GM13977 (cell line): ENCODE measurements at regions of chr11 and their contacts with region 1.

Region 1: DNA sequence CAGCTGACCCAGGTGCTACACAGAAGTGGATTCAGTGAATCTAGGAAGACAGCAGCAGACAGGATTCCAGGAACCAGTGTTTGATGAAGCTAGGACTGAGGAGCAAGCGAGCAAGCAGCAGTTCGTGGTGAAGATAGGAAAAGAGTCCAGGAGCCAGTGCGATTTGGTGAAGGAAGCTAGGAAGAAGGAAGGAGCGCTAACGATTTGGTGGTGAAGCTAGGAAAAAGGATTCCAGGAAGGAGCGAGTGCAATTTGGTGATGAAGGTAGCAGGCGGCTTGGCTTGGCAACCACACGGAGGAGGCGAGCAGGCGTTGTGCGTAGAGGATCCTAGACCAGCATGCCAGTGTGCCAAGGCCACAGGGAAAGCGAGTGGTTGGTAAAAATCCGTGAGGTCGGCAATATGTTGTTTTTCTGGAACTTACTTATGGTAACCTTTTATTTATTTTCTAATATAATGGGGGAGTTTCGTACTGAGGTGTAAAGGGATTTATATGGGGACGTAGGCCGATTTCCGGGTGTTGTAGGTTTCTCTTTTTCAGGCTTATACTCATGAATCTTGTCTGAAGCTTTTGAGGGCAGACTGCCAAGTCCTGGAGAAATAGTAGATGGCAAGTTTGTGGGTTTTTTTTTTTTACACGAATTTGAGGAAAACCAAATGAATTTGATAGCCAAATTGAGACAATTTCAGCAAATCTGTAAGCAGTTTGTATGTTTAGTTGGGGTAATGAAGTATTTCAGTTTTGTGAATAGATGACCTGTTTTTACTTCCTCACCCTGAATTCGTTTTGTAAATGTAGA is 1.7 kb downstream of the MALAT1 start:
- DNase-seq: no peak
- CTCF ChIP-seq: no peak

Region 2: GRCh38 chr11:65314501-65315203 is 185.9 kb before region 1 on chr11 and contains the start of gene CDC42EP2:
- in situ Hi-C with region 1: no loop called
- DNase-seq: peak; percentile 93
- CTCF ChIP-seq: no peak

Region 3: GRCh38 chr11:65429724-65430405 is 70.7 kb before region 1 on chr11:
- in situ Hi-C with region 1: loop called (anchors 5 kb)
- DNase-seq: no peak
- CTCF ChIP-seq: no peak